Prostate gland (tissue), 2 donors: ENCODE measurements at regions of chr11 and their contacts with region 1.

Region 1: DNA sequence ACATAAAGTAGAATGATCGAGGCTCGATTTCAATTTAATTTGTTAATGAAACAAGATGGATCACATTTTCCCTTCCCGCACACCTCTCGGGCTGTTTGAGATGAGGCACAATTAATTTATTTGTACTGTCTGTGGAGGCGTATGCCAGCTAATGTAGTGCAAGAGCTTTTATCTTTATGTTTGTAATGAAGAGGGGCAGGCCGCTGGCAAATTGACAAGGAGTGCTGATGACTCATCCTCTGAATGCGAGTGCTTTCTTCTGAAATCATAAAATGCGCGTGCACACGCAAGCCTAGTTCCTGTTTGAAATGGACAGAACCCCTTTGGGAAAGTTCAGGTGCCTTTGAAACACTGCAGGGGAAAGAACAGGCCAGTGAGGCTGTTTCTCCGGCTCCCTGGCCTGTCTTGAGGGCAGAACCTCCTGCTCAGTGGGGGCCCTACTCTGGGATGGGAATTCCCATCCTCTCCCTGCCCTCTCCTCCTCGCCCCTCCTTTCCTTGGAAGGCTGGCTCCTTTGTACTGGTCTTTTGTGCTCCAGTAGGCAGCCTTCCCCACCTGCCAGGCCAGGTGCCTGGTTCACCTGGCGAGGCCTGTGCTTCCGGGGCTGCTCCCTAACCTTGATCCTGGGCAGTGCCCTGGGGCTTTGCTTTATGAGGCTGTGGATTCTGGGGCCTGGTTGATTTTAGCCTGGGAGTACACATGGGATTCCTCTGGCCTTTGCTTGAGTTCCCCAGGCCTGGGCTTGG is 50.3 kb downstream of the TEAD1 start:
- DNase-seq: peak; percentile 87
- H3K4me3 ChIP-seq: no peak overlapping the region
- H3K27ac ChIP-seq: peak overlapping the region; percentile 56 to 67
- H3K4me1 ChIP-seq: peaks cover 11% of the 10 kb centered on the region
- H3K27me3 ChIP-seq: no peaks in the 10 kb centered on the region
- CTCF ChIP-seq: no peak
- POLR2A ChIP-seq: no peak

Region 2: GRCh38 chr11:12802418-12803085 is 78.1 kb after region 1 on chr11:
- intact Hi-C with region 1: loop called (anchors 10 kb)
- DNase-seq: peak; percentile 84
- H3K4me3 ChIP-seq: no peak overlapping the region
- H3K27ac ChIP-seq: peak overlapping the region; percentile 26 to 50
- H3K4me1 ChIP-seq: peaks cover 14% of the 10 kb centered on the region
- H3K27me3 ChIP-seq: no peaks in the 10 kb centered on the region
- CTCF ChIP-seq: no peak
- POLR2A ChIP-seq: no peak